ENCODE measurements at regions of chr9 and their contacts with region 1.

Region 1: GRCh38 chr9:109499631-109500410 is 1.7 kb upstream of the PTPN3 start:
- DNase-seq: peak; percentile 84

Region 2: GRCh38 chr9:109440797-109441287 is 59.0 kb before region 1 on chr9:
- intact Hi-C with region 1: no loop called
- DNase-seq: no peak

Region 3: GRCh38 chr9:109463924-109464625 is 35.7 kb before region 1 on chr9:
- intact Hi-C with region 1: loop called in 1 of 2 experiments (anchors 2 kb)
- DNase-seq: no peak

Region 4: GRCh38 chr9:109538337-109538736 is 38.5 kb after region 1 on chr9:
- intact Hi-C with region 1: no loop called
- DNase-seq: no peak